ENCODE measurements at regions of chr1 and their contacts with region 1.

Region 1: DNA sequence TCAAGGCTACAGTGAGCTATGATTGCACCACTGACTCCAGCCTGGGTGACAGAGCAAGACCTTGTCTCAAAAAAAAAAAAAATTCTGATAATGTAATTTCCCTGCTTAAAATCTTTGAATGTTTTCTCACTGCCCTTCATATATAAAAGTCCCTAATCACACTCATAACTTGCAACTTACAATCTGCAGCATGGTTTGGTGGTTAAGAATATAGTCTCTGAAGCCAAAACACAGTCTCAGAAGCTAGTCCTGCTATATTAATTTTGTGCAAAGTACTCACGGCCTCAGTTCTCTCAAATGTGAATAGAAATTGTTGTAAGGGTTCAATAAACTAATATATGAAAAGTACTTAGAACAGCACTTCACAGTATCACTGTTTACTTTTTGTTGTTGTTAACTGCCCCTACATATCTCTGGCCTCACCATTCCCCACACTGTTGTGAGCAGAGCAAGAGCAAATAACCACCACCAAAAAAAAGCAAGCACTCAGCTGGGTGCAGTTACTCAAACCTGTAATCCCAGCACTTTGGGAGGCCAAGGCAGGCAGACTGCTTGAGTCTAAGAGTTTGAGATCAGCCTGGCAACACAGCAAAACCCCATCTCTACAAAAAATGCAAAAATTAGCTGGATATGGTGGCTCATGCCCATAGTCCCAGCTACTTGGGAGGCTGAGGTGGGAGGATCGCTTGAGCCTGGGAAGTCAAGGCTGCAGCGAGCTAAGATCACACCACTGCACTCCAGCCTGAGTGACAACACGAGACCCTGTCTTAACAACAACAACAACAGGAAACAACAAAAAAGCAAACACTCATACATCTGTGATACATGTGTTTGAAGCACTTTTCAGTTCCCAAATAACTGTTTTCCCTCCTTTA is 22.4 kb downstream of the ASH1L start:
- DNase-seq: no peak
- H3K4me3 Mint-ChIP-seq: no peak overlapping the region
- H3K27ac Mint-ChIP-seq: peak overlapping the region; percentile 60
- H3K4me1 Mint-ChIP-seq: peaks cover 64% of the 10 kb centered on the region
- H3K27me3 Mint-ChIP-seq: no peaks in the 10 kb centered on the region

Region 2: DNA sequence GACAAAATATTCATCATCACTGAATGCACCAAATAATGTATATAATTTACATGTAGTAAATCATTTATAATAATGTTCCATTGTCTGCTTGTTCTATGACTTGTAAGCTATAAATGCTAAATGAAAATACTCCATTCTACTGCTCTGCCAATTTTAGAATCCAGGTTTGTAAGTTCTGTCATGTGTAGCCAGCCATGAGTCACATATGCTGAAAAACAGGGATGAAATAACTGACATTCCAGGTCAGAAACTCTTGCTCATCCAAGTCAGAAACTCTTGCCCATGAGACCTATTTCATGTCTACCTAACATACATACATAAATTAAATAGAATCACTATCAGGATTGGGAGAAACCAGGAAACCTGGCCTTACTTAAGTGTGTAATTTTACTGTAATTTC is 73.2 kb before region 1 on chr1:
- CTCF ChIA-PET with region 1: interaction called, 4 read pairs
- intact Hi-C with region 1: loop called (anchors 1 kb)
- DNase-seq: no peak
- H3K4me3 Mint-ChIP-seq: no peak overlapping the region
- H3K27ac Mint-ChIP-seq: peak overlapping the region; percentile 74
- H3K4me1 Mint-ChIP-seq: peaks cover 54% of the 10 kb centered on the region
- H3K27me3 Mint-ChIP-seq: no peaks in the 10 kb centered on the region

Region 3: DNA sequence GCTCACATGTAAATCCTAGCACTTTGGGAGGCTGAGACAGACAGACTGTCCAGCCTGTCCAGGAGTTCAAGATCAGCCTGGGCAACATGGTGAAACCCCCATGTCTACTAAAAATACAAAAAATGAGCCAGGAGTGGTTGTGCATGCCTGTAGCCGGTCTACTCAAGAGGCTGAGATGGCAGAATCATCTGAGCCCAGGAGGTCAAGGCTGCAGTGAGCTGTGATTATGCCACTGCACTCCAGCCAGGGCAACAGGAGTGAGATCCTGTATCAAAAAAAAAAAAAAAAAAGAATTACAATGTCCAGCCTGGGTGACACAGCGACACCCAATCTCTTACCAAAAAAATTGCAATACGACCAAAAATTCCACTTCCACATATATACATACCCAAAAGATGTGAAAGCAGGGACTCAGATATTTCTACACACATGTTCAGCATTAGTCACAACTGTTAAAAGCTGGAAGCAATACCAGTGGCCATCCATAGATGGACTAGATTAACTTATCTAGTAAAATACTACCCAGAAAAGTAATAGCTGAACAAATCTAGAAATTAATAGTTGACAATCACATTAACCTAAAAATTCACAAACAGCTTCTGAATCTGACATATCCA is 26.8 kb before region 1 on chr1:
- CTCF ChIA-PET with region 1: no interaction called
- intact Hi-C with region 1: loop called (anchors 2 kb)
- DNase-seq: no peak
- H3K4me3 Mint-ChIP-seq: no peak overlapping the region
- H3K27ac Mint-ChIP-seq: no peak overlapping the region
- H3K4me1 Mint-ChIP-seq: peaks cover 55% of the 10 kb centered on the region
- H3K27me3 Mint-ChIP-seq: no peaks in the 10 kb centered on the region

Region 4: GRCh38 chr1:155553349-155553748 is 13.1 kb after region 1 on chr1:
- CTCF ChIA-PET with region 1: no interaction called
- intact Hi-C with region 1: loop called (anchors 2 kb)
- DNase-seq: no peak
- H3K4me3 Mint-ChIP-seq: no peak overlapping the region
- H3K27ac Mint-ChIP-seq: peak overlapping the region; percentile 48
- H3K4me1 Mint-ChIP-seq: peaks cover 41% of the 10 kb centered on the region
- H3K27me3 Mint-ChIP-seq: no peaks in the 10 kb centered on the region

Region 5: DNA sequence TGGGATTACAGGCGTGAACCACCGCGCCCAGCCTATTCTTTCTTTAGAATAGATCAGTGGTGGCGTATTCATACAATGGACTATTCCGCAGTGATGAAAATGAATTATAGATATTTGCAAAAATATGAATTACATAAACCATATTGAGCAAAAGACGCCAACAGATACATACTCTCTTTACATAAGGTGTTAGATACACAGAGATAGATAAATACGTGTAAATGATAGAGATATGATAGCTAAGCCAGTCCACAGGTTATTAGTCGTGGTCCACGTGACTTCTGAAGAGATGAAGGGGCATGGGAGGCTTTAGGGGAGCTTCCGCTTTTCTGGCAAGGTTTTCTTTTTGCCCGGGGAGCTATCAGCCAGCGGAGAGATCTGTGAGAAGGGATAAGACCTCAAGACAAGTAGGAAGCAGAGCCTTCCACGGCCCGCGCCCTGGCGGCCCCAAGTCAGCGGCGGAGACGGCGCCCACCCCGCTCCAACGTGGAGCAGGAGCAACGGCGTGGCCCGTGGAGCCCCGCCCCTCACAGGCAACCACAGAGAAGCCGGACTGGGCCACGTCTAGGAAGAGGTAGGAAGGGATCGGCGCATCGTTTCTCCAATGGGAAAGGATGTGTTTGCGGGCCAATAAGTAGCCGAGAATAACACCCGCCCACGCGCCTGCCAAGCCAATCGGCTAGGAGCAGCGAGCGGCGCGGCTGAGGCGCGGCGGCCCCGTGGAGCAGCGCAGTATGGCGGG is 69.4 kb after region 1 on chr1 and contains the start of gene MSTO1:
- CTCF ChIA-PET with region 1: no interaction called
- intact Hi-C with region 1: loop called (anchors 1 kb)
- DNase-seq: peak; percentile 100
- H3K4me3 Mint-ChIP-seq: peak within 1 kb of the TSS; percentile 93
- H3K27ac Mint-ChIP-seq: peak within 1 kb of the TSS; percentile 87
- H3K4me1 Mint-ChIP-seq: peaks cover 13% of the 10 kb centered on the region
- H3K27me3 Mint-ChIP-seq: no peaks in the 10 kb centered on the region
- total RNA-seq, gene MSTO1: 58.6 to 63.1 TPM

Measured in activated naive CD4-positive, alpha-beta T cell treated with anti-CD3 and anti-CD28 coated beads for 36 hours (primary cell).